ENCODE measurements at regions of chr15 and their contacts with region 1.

Region 1: GRCh38 chr15:77974098-77974414 is 103.5 kb downstream of the TBC1D2B start:
- DNase-seq: peak; percentile 84
- ATAC-seq: peak; percentile 68

Region 2: DNA sequence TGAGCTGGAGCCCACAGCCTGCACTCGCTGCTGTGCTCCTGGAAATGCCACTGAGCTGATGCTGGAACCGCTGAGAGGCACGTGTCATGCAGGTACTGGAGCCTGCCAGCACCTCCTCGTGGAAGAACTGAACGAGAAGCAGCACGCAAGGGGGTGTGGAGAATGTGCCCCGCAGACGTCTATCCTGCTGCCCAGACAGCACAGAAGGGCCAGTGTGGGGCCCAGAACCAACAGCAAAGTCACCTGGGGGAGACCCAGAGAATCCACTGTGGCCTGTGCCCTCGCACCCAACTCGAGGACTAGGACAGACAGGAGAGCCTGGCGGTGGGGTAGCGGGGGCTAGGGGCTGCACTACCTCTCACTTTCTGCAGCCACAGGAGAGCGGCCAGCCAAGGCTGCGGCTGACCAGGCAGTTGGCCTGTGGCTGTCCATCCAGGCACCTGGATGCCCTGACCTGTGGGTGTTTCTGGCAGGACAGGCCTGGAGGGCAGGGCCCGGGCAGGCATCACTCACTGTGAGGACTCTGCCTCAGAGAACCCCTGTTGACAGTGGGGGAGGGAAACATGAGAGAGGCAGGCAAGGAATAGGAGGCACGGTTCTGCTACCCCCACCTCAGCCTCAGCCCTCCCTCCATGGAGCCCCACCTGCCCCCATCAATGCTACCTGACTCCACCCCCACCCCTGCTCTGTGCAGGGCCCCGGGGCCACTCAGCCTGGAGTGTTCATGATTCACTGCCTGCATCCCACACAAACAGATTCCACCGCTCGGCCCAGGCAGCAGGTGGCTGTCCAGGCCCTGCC is 109.6 kb before region 1 on chr15:
- intact Hi-C with region 1: no loop called
- DNase-seq: peak; percentile 16
- ATAC-seq: no peak

Region 3: DNA sequence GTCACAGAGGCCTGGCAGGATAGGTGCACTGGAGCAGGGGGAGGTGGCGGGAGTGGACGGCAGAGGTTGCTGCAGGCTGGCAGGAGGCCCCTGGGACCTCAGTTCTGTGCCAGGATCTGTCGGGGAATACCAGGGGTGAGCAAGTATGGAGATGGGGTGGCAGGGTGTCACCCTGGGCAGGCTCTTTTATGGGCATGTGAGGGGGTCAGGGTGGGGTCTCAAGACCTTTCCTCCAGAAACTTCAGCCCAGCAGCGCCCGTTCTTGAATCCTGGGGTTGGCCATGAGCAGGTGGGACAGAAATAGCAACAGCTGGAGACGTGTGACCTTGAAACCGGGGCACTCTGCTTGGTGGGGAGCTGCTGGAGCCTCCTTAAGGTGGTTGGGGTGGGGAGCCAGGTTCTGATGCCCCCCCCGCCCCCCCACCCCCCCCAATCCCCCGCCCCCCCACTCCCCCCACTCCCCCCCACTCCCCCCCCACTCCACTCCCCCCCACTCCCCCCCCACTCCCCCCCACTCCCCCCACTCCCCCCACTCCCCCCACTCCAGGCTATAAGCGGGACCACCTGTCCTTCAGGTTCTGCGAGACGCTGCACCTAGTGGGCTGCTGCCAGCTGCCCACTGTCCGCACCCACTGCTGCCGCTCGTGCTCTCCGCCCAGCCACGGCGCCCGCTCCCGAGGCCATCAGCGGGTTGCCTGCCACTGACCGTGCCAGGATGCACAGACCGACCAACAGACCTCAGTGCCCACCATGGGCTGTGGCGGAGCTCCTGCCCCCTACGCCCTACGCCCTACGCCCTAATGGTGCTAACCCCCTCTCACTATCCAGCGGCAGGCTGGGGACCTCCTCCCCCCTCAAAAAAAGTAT is 18.5 kb after region 1 on chr15:
- intact Hi-C with region 1: loop called (anchors 1 kb)
- DNase-seq: peak; percentile 66
- ATAC-seq: no peak

Region 4: DNA sequence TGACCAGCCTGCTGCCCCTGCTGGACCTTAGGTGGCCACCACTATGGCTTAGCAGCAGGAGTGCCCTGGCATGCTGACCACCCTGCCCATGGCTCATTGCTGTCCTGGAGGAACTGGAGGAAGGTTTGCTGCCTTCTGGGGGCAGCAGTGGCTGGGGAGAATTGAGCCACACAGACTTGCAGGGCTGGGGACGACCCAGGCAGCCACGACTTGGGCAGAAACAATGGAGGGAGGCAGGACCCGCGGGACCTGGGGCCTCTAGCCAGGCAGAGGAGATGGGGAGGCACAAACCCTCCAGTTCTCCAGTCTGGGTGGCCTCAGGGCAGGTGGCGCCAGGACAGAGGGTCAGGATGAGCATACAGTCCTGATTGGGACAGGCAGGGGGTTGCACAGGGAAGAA is 804.4 kb after region 1 on chr15:
- intact Hi-C with region 1: loop called (anchors 10 kb)
- DNase-seq: no peak
- ATAC-seq: no peak

Measured in Right ventricle myocardium inferior (tissue), 1 donor.